Dorsolateral prefrontal cortex (tissue), 120 donors: ENCODE measurements at regions of chr1 and their contacts with region 1.

Region 1: DNA sequence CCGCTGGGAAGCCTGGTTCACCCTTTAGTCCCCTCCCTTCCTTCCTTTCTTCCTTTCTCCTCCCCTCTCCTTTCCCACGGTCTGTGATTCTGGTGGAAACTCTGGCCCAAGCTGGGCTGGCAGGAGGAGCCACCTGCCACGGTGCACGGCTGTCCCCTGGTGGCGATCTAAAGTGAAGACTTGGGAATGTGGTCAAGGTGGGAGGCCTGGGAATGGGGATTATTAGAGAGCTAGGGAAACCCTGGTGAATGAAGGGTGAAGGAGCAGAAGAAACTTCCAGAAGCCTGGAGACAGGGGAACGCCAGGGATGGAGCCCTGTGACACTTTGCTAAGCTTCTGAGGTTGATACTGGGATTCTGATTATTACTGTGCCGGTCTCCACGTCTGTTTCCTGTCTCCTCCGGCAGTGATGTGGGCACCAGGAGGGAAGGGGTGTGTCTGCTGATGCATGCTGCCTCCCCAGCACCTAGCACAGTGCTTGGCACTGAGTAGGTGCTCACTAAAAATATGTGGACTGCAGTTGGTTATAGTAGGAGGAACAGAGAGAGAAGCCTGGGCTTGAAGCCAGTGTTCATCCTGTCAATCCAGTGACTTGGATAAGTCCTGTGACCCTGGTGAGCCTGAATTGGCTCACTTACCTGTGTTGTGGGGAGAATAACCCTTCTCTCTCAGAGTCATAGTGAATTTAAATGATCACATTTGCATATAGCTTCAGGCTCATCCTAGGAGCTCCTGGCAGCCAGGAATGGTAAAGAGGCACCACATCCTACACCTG is 71.2 kb upstream of the NBPF3 start:
- DNase-seq: peak; percentile 66 to 87 (median 82)
- H3K4me3 ChIP-seq: no peak overlapping the region
- H3K27ac ChIP-seq: no peak overlapping the region
- H3K27me3 ChIP-seq: no peaks in the 10 kb centered on the region
- CTCF ChIP-seq: peak; percentile 73 to 99 (median 98)

Region 2: DNA sequence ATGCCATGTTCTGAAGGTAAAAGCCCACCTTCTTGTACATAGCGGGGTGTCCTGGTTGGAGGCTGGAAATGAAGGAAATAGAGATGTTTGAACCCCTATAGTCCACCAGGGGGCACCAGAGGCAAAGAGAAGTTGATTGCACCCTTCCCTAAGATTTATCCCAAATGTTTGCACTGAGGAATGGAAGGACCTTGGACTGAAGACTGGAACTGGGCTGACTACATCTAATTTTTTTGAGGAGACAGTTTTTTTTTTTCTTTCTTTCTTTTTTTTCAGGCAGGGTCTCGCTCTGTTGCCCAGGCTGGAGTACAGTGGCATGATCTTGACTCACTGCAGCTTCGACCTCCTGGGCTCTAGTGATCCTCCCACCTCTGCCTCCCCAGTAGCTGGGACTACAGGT is 136.7 kb before region 1 on chr1:
- intact Hi-C with region 1: loop called (anchors 1 to 5 kb)
- DNase-seq: peak in 2 of 10 donors; percentile 56 to 70
- H3K4me3 ChIP-seq: no peak overlapping the region
- H3K27ac ChIP-seq: no peak overlapping the region
- H3K27me3 ChIP-seq: no peaks in the 10 kb centered on the region
- CTCF ChIP-seq: peak; percentile 73 to 95 (median 82)

Region 3: DNA sequence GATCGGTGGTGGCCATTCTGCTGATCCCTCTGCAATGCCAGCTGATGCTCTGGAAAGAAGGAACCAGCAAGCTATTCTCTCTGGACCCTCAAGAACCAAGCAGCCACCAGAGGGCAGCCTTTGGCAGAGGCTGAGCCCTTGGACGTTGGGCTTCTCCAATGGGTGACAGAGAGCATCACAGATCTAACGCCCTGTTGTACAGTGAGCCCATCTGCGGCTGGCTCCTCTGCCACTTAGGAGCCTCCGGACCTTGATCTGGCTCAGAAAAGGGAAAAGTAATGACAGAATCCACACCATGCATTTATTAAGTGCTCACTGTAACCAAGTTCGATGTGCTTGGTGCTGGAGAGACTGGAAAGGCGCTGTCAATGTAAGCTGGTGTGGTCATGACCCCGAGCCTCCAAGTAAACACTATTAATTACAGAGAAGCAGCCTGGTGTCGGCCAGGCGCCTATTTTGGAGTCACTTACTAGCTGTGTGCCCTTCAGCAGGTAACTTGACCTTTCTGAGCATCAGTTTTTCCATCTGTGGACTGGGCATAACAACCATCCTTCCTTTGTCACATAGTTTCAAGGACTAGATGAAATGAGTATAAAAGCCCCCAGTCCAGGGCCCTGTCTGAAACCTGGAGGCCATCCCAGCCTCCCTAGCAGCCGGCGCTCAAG is 113.3 kb before region 1 on chr1:
- intact Hi-C with region 1: loop called (anchors 1 kb)
- DNase-seq: peak; percentile 88 to 97 (median 93)
- H3K4me3 ChIP-seq: peak overlapping the region in 1 of 59 donors; percentile 10
- H3K27ac ChIP-seq: peak overlapping the region in 58 of 59 donors; percentile 18 to 95 (median 83)
- H3K27me3 ChIP-seq: no peaks in the 10 kb centered on the region
- CTCF ChIP-seq: peak; percentile 76 to 98 (median 94)

Region 4: DNA sequence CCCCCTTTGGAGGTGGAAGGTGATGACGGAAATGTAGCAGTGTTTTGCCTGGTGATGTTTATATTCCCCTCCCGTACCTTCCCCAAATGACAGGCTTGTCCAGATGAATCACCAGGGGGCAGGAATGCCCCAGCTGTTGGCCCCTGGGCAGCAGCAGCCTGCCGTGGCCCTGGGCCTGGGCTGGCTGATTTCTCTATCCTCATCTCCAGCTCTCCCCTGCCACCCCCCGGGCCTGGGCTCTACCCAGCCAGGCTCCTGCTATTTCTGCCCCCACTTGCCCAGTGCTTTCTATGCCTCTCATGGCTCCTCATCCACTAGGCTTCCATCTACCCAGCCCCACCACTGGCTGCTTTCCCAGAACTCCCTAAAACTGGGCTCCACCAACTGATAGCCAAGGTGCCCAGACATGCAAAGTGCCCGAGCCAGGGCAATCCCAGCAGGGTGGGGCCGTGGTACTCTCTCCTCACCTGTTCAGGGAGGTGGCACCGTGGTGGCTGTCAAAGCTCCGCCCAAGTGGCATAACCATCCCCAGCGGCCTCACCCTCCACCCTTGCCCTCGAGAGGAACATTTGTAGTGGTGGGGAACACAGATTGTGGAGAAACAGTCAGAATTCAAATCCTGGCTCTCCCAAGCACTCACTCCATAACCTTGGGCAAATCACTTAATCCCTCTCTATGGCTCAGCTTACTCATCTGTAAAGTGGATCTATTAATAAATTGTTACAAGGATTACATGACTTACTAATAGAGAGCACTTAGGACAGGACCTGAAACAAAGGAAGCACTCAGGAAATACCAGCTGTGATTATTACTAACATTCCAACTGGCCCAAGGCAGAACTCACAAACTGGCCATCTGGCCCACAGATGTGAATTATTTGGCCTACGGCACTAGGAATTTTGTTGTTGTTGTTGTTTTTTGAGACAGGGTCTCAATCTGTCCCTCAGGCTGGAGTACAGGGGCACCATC is 65.7 kb before region 1 on chr1:
- intact Hi-C with region 1: loop called in 1 of 2 experiments (anchors 5 kb)
- DNase-seq: no peak
- H3K4me3 ChIP-seq: no peak overlapping the region
- H3K27ac ChIP-seq: peak overlapping the region in 7 of 59 donors; percentile 3 to 38 (median 22)
- H3K27me3 ChIP-seq: no peaks in the 10 kb centered on the region
- CTCF ChIP-seq: peak in 27 of 56 donors; percentile 13 to 60 (median 32)

Region 5: DNA sequence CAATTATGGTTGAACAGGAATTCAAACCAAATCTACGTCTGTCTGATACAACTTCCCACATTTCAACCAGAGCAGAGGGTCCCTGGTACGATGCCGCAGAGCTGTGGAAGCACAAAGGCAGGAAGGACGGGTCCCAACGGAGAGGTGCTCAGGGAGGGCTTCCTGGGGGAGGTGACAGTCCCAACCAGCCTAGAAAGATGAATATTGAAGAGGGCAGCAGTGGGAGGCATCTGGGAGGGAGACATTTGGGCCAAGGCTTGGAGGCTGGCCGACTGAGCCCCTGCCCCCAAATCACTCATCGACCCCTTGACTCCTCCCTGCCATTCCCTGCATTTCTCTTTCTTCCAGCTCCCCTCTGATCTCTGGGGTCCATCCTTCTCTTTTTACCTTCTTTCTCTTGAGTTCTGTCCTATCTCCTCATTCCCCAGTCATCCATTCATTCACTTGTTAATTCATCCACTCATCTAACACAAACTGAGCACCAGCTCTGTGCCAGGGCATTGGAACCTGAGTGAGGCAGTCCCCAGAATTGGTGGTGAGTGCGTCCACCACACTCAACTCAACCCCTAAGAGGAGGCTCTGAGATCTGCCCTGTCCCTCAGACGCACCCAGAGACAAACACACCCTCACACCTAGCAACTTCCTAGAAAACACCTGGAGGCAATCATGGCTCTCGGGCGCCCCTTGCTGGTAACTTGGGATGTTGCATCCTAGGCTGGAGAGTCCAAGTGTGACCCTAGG is 594.9 kb after region 1 on chr1:
- intact Hi-C with region 1: loop called (anchors 2 to 10 kb)
- DNase-seq: peak; percentile 39 to 87 (median 74)
- H3K4me3 ChIP-seq: no peak overlapping the region
- H3K27ac ChIP-seq: no peak overlapping the region
- H3K27me3 ChIP-seq: no peaks in the 10 kb centered on the region
- CTCF ChIP-seq: peak; percentile 74 to 98 (median 93)